ENCODE measurements at regions of chr7 and their contacts with region 1.

Region 1: GRCh38 chr7:90797596-90797995 is 201.5 kb downstream of the CDK14 start:
- DNase-seq: no peak
- ATAC-seq: no peak
- H3K4me3 ChIP-seq: no peak overlapping the region
- H3K27ac ChIP-seq: no peak overlapping the region
- H3K4me1 ChIP-seq: no peaks in the 10 kb centered on the region
- H3K27me3 ChIP-seq: no peaks in the 10 kb centered on the region
- CTCF ChIP-seq: no peak

Region 2: GRCh38 chr7:90774706-90775105 is 22.9 kb before region 1 on chr7:
- intact Hi-C with region 1: loop called in 1 of 10 experiments (anchors 2 kb)
- DNase-seq: no peak
- ATAC-seq: no peak
- H3K4me3 ChIP-seq: no peak overlapping the region
- H3K27ac ChIP-seq: no peak overlapping the region
- H3K4me1 ChIP-seq: peaks cover 0 to 15% (median 5%) of the 10 kb centered on the region in 9 donors
- H3K27me3 ChIP-seq: no peaks in the 10 kb centered on the region
- CTCF ChIP-seq: no peak